ENCODE measurements at regions of chr17 and their contacts with region 1.

Region 1: GRCh38 chr17:63859257-63859656 is 14.2 kb downstream of the CSH2 start:
- DNase-seq: no peak
- H3K4me3 ChIP-seq: no peak overlapping the region
- H3K27me3 ChIP-seq: peaks cover 13% of the 10 kb centered on the region
- CTCF ChIP-seq: no peak

Region 2: DNA sequence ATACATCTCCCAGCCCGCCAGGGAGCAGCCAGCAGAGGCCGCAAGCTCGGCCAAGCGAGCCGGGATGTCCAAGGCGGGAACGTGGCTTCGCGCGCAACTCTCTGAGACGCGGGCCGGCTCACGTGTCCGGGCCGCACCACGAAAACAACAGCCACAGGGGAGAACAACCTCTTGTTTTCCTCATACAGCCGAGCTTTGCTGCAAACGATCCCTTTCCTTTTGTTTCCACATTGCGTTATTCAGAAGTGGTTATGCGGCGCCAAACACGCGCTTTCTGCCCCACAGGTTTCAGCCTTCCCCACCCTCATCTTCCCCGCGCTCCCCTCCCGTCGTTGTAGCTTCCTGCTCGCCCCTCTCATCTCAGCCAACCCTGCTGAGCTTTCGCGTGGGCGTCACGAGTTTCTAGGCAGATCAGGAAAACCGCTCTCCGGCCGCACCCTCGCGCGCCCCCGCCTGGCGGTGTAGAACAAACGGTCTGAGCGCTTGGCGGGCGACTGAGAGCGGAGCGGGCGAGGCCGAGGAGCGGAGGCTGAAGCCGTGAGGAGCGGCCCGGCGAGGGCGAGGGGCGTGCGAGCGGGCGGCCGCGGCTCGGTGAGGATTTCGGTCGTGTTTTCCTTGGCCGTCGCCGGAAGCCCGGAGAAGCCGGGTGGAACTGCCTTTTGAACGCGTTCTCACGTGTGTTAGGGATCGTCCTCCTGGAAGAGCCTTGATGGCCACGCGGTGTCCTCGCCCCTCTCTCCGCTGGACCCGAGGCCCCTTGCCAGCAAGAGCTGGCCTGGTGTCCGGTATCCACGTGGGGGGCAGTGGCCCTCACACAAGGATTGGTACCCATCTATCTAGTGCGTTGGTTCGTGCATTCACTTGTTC is 10.2 kb before region 1 on chr17:
- CTCF ChIA-PET with region 1: interaction called, 36 read pairs
- POLR2A ChIA-PET with region 1: no interaction called
- DNase-seq: no peak
- H3K4me3 ChIP-seq: peak overlapping the region; percentile 32
- H3K27me3 ChIP-seq: peaks cover 3% of the 10 kb centered on the region
- CTCF ChIP-seq: peak; percentile 74